A549 (cell line): ENCODE measurements at regions of chr17 and their contacts with region 1.

Region 1: GRCh38 chr17:59746849-59747445 is 39.5 kb downstream of the VMP1 start:
- DNase-seq: peak; percentile 46 to 82
- ATAC-seq: peak; percentile 74 to 87
- H3K4me3 ChIP-seq: no peak overlapping the region
- H3K27ac ChIP-seq: peak overlapping the region; percentile 93 to 95
- H3K4me1 ChIP-seq: peaks cover 44% of the 10 kb centered on the region
- CTCF ChIP-seq: peak; percentile 95
- EP300 ChIP-seq: no peak
- POLR2A ChIP-seq: no peak
- RAD21 ChIP-seq: peak; percentile 89 to 91

Region 2: GRCh38 chr17:59688008-59688407 is 58.9 kb before region 1 on chr17:
- CTCF ChIA-PET with region 1: no interaction called
- POLR2A ChIA-PET with region 1: no interaction called
- DNase-seq: no peak
- ATAC-seq: peak in 1 of 2 experiments; percentile 18; a peak in 3 of 6 replicates
- H3K4me3 ChIP-seq: no peak overlapping the region
- H3K27ac ChIP-seq: 0 out of 6 replicates have a peak overlapping the region, but pooled peaks of 1 of the 2 experiments have one; percentile 11
- H3K4me1 ChIP-seq: no peaks in the 10 kb centered on the region
- CTCF ChIP-seq: no peak
- EP300 ChIP-seq: no peak
- POLR2A ChIP-seq: no peak
- RAD21 ChIP-seq: no peak

Region 3: GRCh38 chr17:59727817-59728533 is 19.0 kb before region 1 on chr17:
- CTCF ChIA-PET with region 1: interaction called, 33 read pairs
- POLR2A ChIA-PET with region 1: no interaction called
- DNase-seq: no peak
- ATAC-seq: no peak
- H3K4me3 ChIP-seq: no peak overlapping the region
- H3K27ac ChIP-seq: peak overlapping the region in 1 of 2 experiments; percentile 46; a peak in 1 of 6 replicates
- H3K4me1 ChIP-seq: peaks cover 77% of the 10 kb centered on the region
- CTCF ChIP-seq: no peak
- EP300 ChIP-seq: no peak
- POLR2A ChIP-seq: no peak
- RAD21 ChIP-seq: no peak

Region 4: DNA sequence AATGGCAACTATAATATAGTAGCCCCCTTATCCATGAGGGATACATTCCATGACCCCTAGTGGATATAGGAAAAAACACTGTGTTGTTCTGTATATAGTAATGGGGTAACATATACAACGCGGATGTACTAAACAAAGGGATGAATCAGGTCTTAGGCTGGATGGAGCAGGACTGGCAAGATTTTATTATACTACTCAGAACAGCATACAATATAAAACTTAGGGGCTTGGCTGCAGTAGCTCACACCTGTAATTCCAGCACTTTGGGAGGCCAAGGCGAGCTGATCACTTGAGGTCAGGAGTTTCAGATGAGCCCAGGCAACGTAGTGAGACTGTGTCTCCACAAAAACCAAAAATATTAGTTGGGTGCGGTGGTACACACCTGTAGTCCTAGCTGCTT is 12.7 kb before region 1 on chr17:
- CTCF ChIA-PET with region 1: interaction called, 33 read pairs
- POLR2A ChIA-PET with region 1: no interaction called
- DNase-seq: no peak
- ATAC-seq: peak in 1 of 2 experiments; percentile 35; a peak in 2 of 6 replicates
- H3K4me3 ChIP-seq: no peak overlapping the region
- H3K27ac ChIP-seq: no peak overlapping the region
- H3K4me1 ChIP-seq: peaks cover 24% of the 10 kb centered on the region
- CTCF ChIP-seq: no peak
- EP300 ChIP-seq: no peak
- POLR2A ChIP-seq: no peak
- RAD21 ChIP-seq: no peak

Region 5: GRCh38 chr17:59907467-59907866 is 160.5 kb after region 1 on chr17:
- CTCF ChIA-PET with region 1: interaction called, 17 read pairs
- POLR2A ChIA-PET with region 1: no interaction called
- DNase-seq: no peak
- ATAC-seq: no peak
- H3K4me3 ChIP-seq: no peak overlapping the region
- H3K27ac ChIP-seq: no peak overlapping the region
- H3K4me1 ChIP-seq: no peaks in the 10 kb centered on the region
- CTCF ChIP-seq: no peak
- EP300 ChIP-seq: no peak
- POLR2A ChIP-seq: no peak
- RAD21 ChIP-seq: no peak

Region 6: DNA sequence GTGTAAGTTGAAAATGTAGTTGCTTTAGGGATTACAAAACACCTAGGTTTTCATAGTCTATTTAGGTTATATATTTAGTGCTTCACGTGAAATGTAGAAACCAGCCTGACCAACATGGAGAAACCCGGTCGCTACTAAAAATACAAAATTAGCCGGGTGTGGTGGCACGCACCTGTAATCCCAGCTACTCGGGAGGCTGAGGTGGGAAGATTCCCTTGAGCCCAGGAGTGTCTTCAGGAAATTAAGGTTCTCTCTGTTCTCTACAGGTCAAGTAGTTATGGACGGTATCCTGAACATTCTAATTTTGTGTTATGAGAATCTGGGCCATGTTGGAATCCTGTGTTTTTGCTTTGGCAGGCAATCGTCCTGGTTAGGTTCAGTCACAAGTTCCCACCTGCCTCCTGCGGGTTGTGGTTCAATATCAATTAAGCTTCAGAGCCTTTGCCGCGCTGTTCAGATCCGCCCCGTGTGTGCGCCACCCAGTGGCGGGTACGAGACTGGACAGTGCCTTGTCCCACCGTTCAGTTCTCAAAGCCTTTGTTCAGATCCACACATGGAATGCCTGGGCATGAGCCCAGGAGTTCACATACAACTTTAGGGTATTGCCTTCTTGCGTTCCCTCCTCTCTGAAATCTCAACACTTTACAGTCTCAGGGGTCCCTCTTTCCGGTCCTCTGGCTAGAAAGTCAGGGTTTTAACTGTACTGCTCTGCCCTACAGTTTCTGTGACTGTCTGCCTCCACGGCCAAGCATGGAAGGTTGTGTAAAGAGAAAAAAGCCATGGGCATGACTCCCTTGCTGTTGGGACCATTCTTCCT is 290.1 kb after region 1 on chr17:
- CTCF ChIA-PET with region 1: interaction called, 21 read pairs
- POLR2A ChIA-PET with region 1: no interaction called
- DNase-seq: peak; percentile 81 to 84
- ATAC-seq: peak; percentile 87 to 94
- H3K4me3 ChIP-seq: no peak overlapping the region
- H3K27ac ChIP-seq: peak overlapping the region; percentile 11 to 59; a peak in 5 of 6 replicates
- H3K4me1 ChIP-seq: peaks cover 5% of the 10 kb centered on the region
- CTCF ChIP-seq: peak; percentile 96
- EP300 ChIP-seq: no peak
- POLR2A ChIP-seq: no peak
- RAD21 ChIP-seq: peak; percentile 66 to 69